AG04449 (cell line): ENCODE measurements at regions of chr12 and their contacts with region 1.

Region 1: GRCh38 chr12:31406345-31406744 is 80.4 kb upstream of the SINHCAF start:
- DNase-seq: no peak
- H3K4me3 ChIP-seq: no peak overlapping the region
- CTCF ChIP-seq: no peak

Region 2: GRCh38 chr12:31387466-31387865 is 18.9 kb before region 1 on chr12:
- CTCF ChIA-PET with region 1: interaction called, 11 read pairs
- POLR2A ChIA-PET with region 1: no interaction called
- DNase-seq: no peak
- H3K4me3 ChIP-seq: no peak overlapping the region
- CTCF ChIP-seq: no peak

Region 3: GRCh38 chr12:31631784-31632183 is 225.4 kb after region 1 on chr12:
- CTCF ChIA-PET with region 1: interaction called, 103 read pairs
- POLR2A ChIA-PET with region 1: no interaction called
- DNase-seq: no peak
- H3K4me3 ChIP-seq: no peak overlapping the region
- CTCF ChIP-seq: no peak

Region 4: DNA sequence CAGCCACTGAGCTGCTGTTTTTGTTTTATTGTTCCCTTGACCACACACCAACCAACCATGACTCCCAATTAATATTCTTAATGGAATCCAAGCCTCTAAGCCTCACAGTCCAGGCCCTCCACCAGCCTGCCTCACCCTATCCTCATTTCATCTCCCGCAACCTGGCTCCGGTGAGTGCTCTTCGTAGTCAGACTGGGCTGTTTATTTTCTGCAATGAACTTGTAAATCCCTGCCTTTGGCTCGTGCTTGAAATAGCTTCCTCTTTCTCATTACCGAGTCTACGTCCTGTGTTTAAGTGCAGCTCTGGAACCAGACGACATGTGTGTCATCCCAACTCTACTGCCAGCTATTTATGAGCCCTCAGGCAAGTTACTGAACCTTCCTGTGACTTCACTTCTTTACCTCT is 240.7 kb after region 1 on chr12:
- CTCF ChIA-PET with region 1: interaction called, 139 read pairs
- POLR2A ChIA-PET with region 1: interaction called, 3 read pairs
- DNase-seq: no peak
- H3K4me3 ChIP-seq: no peak overlapping the region
- CTCF ChIP-seq: no peak